Heart right ventricle (tissue), 16 donors: ENCODE measurements at regions of chr11 and their contacts with region 1.

Region 1: DNA sequence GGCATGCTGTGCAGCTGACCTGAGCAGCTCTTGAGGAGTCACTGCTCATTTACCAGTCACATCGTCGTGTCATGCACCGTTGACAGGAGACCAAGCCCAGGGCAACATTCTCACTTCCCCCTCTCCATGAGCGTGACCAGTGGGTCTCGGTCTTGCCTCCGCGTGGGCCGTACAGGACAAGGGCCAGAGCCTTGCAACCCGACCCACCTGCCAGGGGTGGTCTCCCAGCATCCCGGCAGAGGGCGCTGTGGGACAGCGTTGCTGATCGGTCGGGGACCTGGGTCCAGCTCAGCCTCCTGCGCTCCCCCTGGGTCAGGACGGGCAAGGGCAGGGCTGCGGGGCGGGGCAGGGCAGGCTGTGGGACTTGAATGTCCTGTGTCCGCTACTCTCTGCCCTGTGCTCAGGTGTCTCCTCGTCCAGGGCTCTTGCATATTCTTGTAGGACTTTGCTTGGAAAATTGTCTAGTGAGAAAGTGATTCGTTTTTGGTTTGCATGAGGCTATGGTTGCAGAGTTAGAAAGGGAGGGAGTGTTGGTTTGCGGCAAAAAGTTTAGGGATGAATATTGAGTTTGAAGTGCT is 16.2 kb downstream of the EIF4G2 start:
- DNase-seq: peak; percentile 88 to 92
- ATAC-seq: peak; percentile 93 to 96 (median 94)
- H3K4me3 ChIP-seq: peak overlapping the region in 5 of 10 donors; percentile 7 to 32 (median 28)
- H3K27ac ChIP-seq: no peak overlapping the region
- H3K4me1 ChIP-seq: peaks cover 0 to 25% (median 6%) of the 10 kb centered on the region in 9 donors
- H3K27me3 ChIP-seq: no peaks in the 10 kb centered on the region
- CTCF ChIP-seq: peak; percentile 84 to 97 (median 93)

Region 2: DNA sequence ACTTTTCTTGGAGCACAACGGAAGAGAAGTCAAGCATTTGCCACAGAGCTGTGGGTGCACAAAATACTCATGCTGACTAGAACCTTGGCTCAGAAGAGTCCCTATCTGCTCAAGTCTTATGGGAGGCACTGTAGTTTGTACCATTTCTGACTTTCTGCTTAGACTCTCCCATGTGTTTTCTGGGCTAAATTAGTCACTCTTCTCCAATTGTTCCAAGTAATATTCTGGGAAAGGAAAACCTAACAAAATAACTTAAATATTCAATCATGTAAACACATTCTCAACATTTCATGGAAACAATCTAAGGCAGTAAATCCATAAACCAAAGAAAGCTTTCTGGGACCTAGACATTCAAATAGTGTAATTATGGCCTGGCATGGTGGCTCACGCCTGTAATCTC is 907.9 kb before region 1 on chr11:
- intact Hi-C with region 1: no loop called
- DNase-seq: no peak
- ATAC-seq: no peak
- H3K4me3 ChIP-seq: no peak overlapping the region
- H3K27ac ChIP-seq: no peak overlapping the region
- H3K4me1 ChIP-seq: no peaks in the 10 kb centered on the region
- H3K27me3 ChIP-seq: no peaks in the 10 kb centered on the region
- CTCF ChIP-seq: no peak

Region 3: DNA sequence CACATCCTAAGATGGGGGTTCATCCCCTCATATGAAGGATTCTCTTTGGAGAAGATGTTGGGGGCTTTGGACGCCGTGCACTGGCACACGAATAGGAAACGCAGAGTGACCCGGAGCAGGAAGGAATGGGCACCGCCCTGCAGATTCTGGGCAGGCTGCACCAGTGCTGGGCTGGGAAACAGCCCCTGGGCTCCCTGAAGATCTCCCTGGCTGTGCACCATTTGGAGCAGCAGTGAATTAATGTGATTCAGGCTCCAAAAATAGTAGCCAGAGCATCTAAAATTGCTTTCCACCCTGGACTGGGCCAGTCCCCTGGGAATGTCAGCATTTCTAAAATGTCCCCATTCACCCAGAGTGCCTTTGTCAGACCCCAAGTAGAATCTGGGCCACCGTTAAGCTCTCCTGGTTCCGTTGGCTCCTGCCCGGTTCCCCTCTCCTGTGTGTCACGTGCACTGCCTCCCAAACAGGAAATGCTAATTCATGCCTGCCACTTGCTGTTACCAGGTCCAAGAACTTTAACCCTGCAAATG is 117.5 kb before region 1 on chr11:
- intact Hi-C with region 1: no loop called
- DNase-seq: peak; percentile 34 to 62
- ATAC-seq: peak; percentile 79 to 94 (median 91)
- H3K4me3 ChIP-seq: peak overlapping the region in 7 of 10 donors; percentile 4 to 44 (median 38)
- H3K27ac ChIP-seq: peak overlapping the region; percentile 37 to 82 (median 72)
- H3K4me1 ChIP-seq: peaks cover 5 to 37% (median 23%) of the 10 kb centered on the region in 9 donors
- H3K27me3 ChIP-seq: no peaks in the 10 kb centered on the region
- CTCF ChIP-seq: no peak

Region 4: GRCh38 chr11:10906513-10906912 is 114.0 kb after region 1 on chr11:
- intact Hi-C with region 1: loop called in 6 of 10 experiments (anchors 5 to 10 kb)
- DNase-seq: no peak
- ATAC-seq: peak in 7 of 8 donors; percentile 9 to 66 (median 41)
- H3K4me3 ChIP-seq: no peak overlapping the region
- H3K27ac ChIP-seq: no peak overlapping the region
- H3K4me1 ChIP-seq: peaks cover 0 to 29% (median 9%) of the 10 kb centered on the region in 9 donors
- H3K27me3 ChIP-seq: no peaks in the 10 kb centered on the region
- CTCF ChIP-seq: peak in 6 of 9 donors; percentile 21 to 54 (median 34)

Region 5: DNA sequence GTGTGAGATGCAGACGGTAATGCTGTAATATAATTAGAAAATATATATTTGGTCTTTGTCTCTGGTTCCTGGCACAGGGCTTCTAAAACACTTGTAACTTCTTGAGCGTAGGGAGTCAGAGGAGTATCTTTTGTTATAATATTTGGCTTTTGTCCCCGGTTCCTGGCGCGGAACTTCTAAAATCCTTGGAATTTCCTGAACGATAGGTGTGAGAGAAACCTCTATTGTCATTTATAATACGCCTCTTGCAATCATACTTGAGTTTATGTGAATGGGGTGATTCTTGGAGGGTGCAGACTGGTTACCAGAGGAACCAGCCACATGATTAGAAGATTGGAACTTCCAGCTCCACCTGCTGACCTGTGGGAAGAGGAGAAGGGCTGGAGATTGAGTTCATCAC is 119.4 kb after region 1 on chr11:
- intact Hi-C with region 1: loop called in 6 of 10 experiments (anchors 5 to 10 kb)
- DNase-seq: no peak
- ATAC-seq: peak; percentile 25 to 80 (median 52)
- H3K4me3 ChIP-seq: no peak overlapping the region
- H3K27ac ChIP-seq: peak overlapping the region in 6 of 10 donors; percentile 6 to 71 (median 38)
- H3K4me1 ChIP-seq: peaks cover 0 to 27% (median 16%) of the 10 kb centered on the region in 9 donors
- H3K27me3 ChIP-seq: no peaks in the 10 kb centered on the region
- CTCF ChIP-seq: peak in 3 of 9 donors; percentile 10 to 34 (median 28)

Region 6: DNA sequence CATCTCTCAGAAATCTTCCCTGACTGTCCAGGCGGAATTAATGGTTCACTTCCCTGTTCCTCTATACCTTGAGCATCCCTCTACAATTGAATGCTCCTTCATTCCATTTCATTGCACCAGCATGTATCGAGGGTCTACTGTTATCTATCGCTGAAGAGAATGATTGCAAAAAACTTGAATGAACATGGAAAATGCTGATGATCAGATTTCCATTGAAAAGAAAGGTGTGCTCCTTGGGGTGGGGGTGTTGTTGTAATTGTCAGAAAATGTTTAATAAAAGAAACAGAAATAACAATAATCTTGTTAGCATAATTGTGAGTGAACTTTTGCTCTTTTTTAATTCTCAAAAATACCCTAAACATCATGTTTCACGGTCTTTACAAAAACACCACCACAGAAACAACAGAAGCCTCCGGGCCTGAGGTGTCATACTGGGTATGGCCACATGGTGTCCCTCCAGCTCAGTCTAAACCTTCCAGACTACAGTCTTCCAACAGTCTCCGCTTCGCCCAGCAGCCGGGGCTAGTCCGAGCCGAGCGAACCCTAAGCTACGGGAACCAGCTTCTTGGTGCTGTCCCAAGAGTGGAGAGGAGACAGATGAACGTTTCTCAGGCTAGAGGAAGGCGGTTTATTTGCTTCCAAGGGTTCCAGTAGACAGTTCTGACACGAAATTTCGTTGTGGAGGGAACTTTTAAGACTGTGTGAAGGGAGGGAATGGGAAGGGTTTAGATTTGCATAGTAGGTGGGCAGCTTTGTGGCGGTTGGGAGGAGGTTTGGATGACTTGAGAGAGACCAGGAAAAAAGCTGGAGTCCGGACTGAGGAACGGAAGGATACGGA is 141.2 kb after region 1 on chr11:
- intact Hi-C with region 1: loop called in 4 of 10 experiments (anchors 5 to 10 kb)
- DNase-seq: peak; percentile 87 to 91
- ATAC-seq: peak; percentile 78 to 93 (median 89)
- H3K4me3 ChIP-seq: peak overlapping the region; percentile 7 to 56 (median 52)
- H3K27ac ChIP-seq: peak overlapping the region; percentile 28 to 89 (median 72)
- H3K4me1 ChIP-seq: peaks cover 0 to 33% (median 17%) of the 10 kb centered on the region in 9 donors
- H3K27me3 ChIP-seq: peaks cover 0 to 49% (median 0%) of the 10 kb centered on the region in 7 donors
- CTCF ChIP-seq: peak; percentile 90 to 99 (median 95)

Region 7: DNA sequence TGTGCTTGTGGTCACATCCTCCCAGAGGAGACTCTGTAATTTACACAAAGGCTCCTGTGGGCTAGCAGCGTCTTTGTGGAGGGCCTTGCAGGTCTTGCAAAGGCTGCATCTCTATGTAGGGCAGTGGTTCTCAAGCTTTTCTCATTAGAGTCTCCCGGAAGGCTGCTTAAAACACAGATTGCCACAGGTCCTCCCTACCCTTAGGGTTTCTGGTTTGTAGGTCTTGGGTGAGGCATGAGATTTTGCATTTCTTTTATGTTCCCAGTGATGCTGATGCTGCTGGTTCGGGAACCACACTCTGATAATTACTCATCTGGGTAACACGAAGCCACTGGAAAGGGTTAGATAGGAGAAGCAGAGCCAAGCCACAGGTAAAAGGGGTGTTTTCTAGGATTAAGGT is 216.7 kb after region 1 on chr11:
- intact Hi-C with region 1: loop called in 1 of 10 experiments (anchors 5 kb)
- DNase-seq: no peak
- ATAC-seq: no peak
- H3K4me3 ChIP-seq: no peak overlapping the region
- H3K27ac ChIP-seq: no peak overlapping the region
- H3K4me1 ChIP-seq: peaks cover 0 to 11% (median 3%) of the 10 kb centered on the region in 9 donors
- H3K27me3 ChIP-seq: peaks cover 0 to 29% (median 11%) of the 10 kb centered on the region in 7 donors
- CTCF ChIP-seq: no peak

Region 8: GRCh38 chr11:11022125-11022730 is 229.7 kb after region 1 on chr11:
- intact Hi-C with region 1: loop called (anchors 1 to 5 kb)
- DNase-seq: peak in 1 of 2 donors; percentile 21
- ATAC-seq: no peak
- H3K4me3 ChIP-seq: no peak overlapping the region
- H3K27ac ChIP-seq: no peak overlapping the region
- H3K4me1 ChIP-seq: no peaks in the 10 kb centered on the region
- H3K27me3 ChIP-seq: no peaks in the 10 kb centered on the region
- CTCF ChIP-seq: peak in 8 of 9 donors; percentile 32 to 69 (median 62)

Region 9: GRCh38 chr11:11028017-11028692 is 235.7 kb after region 1 on chr11:
- intact Hi-C with region 1: loop called in 9 of 10 experiments (anchors 1 to 5 kb)
- DNase-seq: peak; percentile 58 to 68
- ATAC-seq: peak; percentile 69 to 84 (median 78)
- H3K4me3 ChIP-seq: no peak overlapping the region
- H3K27ac ChIP-seq: no peak overlapping the region
- H3K4me1 ChIP-seq: no peaks in the 10 kb centered on the region
- H3K27me3 ChIP-seq: no peaks in the 10 kb centered on the region
- CTCF ChIP-seq: peak; percentile 40 to 82 (median 75)